ENCODE measurements at regions of chr12 and their contacts with region 1.

Region 1: DNA sequence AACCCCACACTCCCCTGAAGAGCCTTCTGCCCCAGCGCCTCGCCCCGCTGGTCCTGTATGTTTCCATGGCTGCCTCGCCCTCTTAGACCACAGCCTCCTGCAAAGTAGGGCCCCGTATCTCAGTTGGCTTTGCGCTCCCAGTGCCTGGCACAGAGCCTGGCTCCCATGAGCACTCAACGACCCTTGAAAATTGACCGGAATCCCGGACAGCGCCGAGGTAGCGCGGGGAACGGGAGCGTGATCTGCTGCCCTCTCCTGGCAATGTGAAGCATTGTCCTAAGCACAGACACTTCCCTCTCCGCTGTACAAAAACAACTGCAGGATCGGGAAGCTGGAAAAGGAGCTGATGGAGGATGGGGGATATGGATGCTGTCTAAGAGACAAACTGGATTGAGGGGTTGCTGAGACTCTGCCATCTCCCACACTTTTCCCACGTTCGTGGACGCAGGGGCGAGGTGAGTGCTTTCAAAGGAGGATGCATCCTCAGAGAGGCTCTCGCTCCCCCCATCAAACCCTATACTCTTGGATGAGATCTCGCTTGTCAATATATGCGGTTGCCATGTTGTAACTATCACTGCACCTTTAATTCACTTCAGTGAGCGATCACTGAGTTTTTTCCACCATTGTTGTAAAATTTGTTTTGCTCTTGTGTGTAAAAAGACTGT is 10.7 kb upstream of the FKBP4 start:
- DNase-seq: peak; percentile 85
- ATAC-seq: peak; percentile 96

Region 2: GRCh38 chr12:2739817-2740641 is 44.0 kb before region 1 on chr12:
- intact Hi-C with region 1: loop called (anchors 1 kb)
- DNase-seq: no peak
- ATAC-seq: peak; percentile 21

Measured in Right ventricle myocardium inferior (tissue), 1 donor.